Head of caudate nucleus (tissue), 42 donors: ENCODE measurements at regions of chr15 and their contacts with region 1.

Region 1: DNA sequence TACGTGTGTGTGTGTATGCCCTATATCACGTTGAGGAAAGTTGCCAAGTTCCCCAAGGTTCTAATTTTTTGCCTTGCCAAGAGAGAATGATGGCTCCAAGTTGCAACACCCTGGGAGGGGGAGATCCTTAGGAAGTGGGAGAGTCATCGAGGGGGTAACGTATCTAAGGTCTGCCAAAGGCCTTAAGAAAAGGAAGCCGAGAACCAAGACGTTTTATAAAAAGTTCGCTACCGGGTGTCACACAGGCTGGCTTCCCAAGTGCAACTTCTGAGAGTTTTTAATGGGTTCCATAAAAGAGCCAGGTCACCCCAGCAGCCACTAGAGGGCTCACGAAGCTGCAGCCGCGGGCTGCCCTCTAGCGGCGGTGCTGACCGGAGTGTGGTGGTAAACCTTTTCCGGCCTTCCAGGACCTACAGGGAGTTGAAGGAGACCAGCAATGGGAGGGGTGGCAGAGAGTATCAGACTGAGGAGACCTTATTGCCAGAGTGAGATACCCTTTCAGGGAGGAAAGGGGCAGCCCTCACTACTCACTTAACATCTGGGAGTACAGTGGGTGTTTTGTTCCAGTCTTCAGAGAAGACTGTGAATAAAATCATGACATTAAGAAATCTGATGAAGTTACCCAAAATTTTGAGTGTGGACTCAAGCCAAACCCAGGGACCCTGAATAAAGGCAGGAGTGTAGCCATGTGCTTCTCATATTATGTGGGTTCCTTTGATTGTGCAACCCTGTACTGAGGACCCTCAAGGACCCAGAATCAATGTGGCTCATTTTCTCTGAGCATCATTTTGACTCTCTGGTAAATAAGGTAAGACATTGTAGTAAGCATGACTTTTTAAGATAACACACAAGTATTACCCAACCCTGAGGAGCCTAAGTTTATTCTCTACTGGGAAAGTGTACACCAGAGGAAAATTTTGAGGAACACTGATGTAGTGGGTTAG is 2.5 kb upstream of the RFX7 start:
- DNase-seq: peak; percentile 77 to 95 (median 89)

Region 2: DNA sequence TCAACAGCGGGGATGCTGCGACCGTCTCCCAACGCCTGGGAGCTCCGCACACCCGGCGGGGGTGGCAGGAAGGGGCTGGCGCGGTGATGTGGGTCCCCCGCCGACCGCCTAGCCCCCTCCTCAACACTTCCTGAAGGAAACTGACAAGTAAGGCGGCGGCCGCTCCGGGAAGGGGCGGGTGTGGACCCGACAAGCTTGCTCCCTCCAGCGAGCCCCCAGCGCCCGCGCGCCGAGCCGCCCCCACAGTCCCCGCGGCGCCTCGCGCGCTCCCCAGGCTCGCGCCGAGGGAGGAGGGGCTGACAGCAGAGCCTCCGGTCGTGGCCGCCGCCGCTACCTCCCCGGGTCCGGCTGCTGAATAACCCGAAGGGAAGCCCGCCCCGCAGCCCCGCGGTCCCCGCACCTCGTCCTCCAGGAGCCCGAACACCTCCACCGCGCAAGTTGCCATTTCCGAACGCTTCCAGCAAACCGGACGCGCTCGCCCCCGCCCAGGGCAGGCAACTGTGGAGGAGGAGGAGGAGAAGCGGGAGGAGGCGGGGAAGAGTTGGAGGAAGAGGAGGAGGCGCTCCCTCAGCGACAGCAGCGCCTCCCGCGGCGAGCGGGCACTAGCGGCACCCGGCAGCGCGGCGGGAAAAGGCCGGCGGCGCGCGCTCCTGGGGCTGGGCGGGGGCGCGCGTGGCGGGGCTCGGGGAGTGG is 252.9 kb before region 1 on chr15 and contains the start of gene NEDD4:
- intact Hi-C with region 1: loop called (anchors 10 kb)
- DNase-seq: peak in 40 of 42 donors; percentile 53 to 94 (median 86)

Region 3: DNA sequence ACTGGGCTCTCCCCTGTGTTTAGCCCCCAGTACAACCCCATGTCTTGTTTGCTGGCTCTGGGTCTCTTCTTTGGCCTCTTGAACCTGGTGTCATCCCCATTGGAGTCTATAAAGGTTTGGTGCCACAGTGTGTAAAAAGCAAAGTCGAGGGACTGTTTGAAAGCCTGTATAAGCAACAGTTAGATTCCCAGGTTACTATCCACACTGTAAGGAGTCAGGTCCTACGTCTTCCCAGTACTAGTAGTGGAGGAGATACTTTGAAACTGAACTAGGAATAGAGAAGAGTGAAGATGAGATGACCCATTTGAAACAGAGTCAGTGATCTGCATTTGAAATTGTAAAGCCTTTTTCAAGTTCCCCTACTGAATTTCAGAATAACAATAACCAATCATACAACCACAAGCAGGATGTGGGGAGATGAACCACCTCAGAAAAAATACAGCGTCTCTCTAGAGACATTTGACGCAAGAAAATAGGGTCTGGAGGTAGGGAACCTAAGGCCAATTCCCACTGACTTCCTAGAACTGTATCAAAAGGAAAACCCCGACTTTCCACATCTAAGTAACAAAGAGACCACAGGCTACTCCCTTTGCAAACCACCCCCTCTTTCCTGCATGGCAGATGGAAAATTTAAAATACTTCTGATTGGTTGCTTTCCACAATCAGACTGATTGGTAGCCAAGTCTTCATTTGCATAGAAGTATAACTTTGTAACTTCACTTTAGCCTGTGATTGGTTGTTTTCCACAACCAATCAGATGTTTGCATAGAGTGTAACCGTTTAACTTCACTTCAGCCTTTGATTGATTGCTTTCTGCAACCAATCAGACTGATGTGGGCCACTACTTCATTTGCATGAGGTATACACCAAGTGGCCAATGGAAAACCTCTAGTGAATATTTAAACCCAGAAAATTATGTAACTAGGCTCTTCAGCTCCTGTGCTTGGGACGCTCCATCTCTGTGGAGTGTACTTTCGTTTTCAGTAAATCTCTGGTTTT is 202.9 kb before region 1 on chr15:
- intact Hi-C with region 1: no loop called
- DNase-seq: no peak